ENCODE measurements at regions of chr4 and their contacts with region 1.

Region 1: GRCh38 chr4:121696581-121697461 is at the start of gene ANXA5:
- DNase-seq: peak; percentile 69 to 93
- H3K4me3 ChIP-seq: peak within 1 kb of the TSS; percentile 64
- H3K27ac ChIP-seq: peak within 1 kb of the TSS; percentile 63
- H3K4me1 ChIP-seq: peaks cover 44% of the 10 kb centered on the region
- H3K27me3 ChIP-seq: no peaks in the 10 kb centered on the region
- CTCF ChIP-seq: peak; percentile 32; the same call in 1 of the 2 replicates
- total RNA-seq, gene ANXA5: 177 and 230 TPM in 2 replicates

Region 2: GRCh38 chr4:121519236-121519838 is 177.5 kb before region 1 on chr4:
- CTCF ChIA-PET with region 1: no interaction called
- POLR2A ChIA-PET with region 1: no interaction called
- intact Hi-C with region 1: no loop called
- DNase-seq: no peak
- H3K4me3 ChIP-seq: no peak overlapping the region
- H3K27ac ChIP-seq: no peak overlapping the region
- H3K4me1 ChIP-seq: no peaks in the 10 kb centered on the region
- H3K27me3 ChIP-seq: no peaks in the 10 kb centered on the region
- CTCF ChIP-seq: no peak

Region 3: GRCh38 chr4:121726642-121727268 is 29.9 kb after region 1 on chr4:
- CTCF ChIA-PET with region 1: interaction called, 5 read pairs
- POLR2A ChIA-PET with region 1: interaction called, 4 read pairs
- intact Hi-C with region 1: loop called (anchors 2 kb)
- DNase-seq: peak in 1 of 2 experiments; percentile 59
- H3K4me3 ChIP-seq: no peak overlapping the region
- H3K27ac ChIP-seq: no peak overlapping the region
- H3K4me1 ChIP-seq: peaks cover 16% of the 10 kb centered on the region
- H3K27me3 ChIP-seq: no peaks in the 10 kb centered on the region
- CTCF ChIP-seq: peak; percentile 80

Region 4: GRCh38 chr4:121800961-121801714 is 104.3 kb after region 1 on chr4 and contains the start of gene EXOSC9:
- CTCF ChIA-PET with region 1: no interaction called
- POLR2A ChIA-PET with region 1: no interaction called
- intact Hi-C with region 1: loop called (anchors 5 kb)
- DNase-seq: peak; percentile 85 to 92
- H3K4me3 ChIP-seq: peak within 1 kb of the TSS; percentile 87
- H3K27ac ChIP-seq: peak within 1 kb of the TSS; percentile 62
- H3K4me1 ChIP-seq: peaks cover 18% of the 10 kb centered on the region
- H3K27me3 ChIP-seq: no peaks in the 10 kb centered on the region
- CTCF ChIP-seq: no peak
- total RNA-seq, gene EXOSC9: 23.0 and 29.9 TPM in 2 replicates

Region 5: DNA sequence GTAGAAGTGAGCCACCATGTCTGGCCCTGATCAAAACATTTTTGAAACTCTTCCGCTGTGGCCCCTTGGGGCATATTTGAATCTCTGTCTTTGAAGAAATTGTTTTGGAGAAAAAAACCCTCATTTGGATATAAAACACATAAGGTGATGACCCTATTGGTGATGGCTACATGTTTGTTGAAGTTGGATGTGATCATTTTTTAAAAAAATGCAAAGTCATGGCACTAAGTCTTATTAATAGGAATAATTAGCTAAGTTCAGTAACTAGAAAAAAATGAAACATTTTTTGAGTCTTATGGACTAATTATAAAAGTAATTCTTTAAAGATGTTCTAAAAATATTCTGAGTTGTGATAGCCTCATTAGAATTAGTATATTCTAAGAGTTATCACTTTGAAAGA is 191.3 kb after region 1 on chr4:
- CTCF ChIA-PET with region 1: no interaction called
- POLR2A ChIA-PET with region 1: no interaction called
- intact Hi-C with region 1: no loop called
- DNase-seq: no peak
- H3K4me3 ChIP-seq: no peak overlapping the region
- H3K27ac ChIP-seq: no peak overlapping the region
- H3K4me1 ChIP-seq: no peaks in the 10 kb centered on the region
- H3K27me3 ChIP-seq: no peaks in the 10 kb centered on the region
- CTCF ChIP-seq: no peak

Region 6: DNA sequence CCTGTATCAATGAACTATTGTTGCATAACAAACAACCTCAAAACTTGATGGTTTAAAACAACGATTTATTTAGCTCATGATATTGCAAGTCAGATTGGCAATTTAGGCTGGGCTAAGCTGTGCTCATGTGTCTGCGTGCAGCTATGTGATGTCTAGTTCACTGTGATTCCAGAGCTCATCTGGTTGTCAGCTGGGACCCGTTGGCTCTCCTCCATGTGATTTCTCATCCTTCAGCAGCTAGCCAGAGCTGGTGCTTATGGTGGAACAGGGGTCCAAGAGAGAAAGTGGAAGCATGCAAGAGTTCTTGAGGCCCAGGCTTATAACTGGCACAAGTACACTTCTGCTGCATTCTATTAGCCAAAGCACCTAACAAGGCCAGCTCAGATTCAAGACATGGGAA is 283.8 kb after region 1 on chr4:
- CTCF ChIA-PET with region 1: no interaction called
- POLR2A ChIA-PET with region 1: no interaction called
- intact Hi-C with region 1: no loop called
- DNase-seq: no peak
- H3K4me3 ChIP-seq: no peak overlapping the region
- H3K27ac ChIP-seq: no peak overlapping the region
- H3K4me1 ChIP-seq: no peaks in the 10 kb centered on the region
- H3K27me3 ChIP-seq: no peaks in the 10 kb centered on the region
- CTCF ChIP-seq: no peak

Region 7: DNA sequence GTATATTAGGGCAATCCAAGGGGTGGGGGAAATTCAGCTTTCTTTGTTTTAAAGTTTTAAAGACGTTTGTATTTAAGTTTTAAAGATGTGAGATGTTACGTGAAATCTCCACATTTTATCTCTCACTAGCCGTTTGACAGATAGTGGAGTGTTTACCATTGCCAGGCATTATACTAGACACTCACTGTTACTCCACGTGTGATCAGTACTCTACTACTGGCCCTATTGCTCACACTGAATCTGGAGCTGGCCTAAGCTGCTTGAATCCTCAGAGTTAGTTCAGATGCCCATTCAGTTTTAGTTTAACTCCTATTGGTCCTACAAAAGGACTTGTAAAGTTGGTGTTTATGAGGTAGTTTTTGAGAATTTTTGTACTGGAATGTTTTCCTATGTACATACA is 686.5 kb after region 1 on chr4:
- CTCF ChIA-PET with region 1: no interaction called
- POLR2A ChIA-PET with region 1: no interaction called
- intact Hi-C with region 1: no loop called
- DNase-seq: no peak
- H3K4me3 ChIP-seq: no peak overlapping the region
- H3K27ac ChIP-seq: no peak overlapping the region
- H3K4me1 ChIP-seq: no peaks in the 10 kb centered on the region
- H3K27me3 ChIP-seq: no peaks in the 10 kb centered on the region
- CTCF ChIP-seq: no peak

Measured in PC-9 (cell line).